Colonic mucosa (tissue), 4 donors: ENCODE measurements at regions of chr1 and their contacts with region 1.

Region 1: GRCh38 chr1:40416709-40417108 is 33.6 kb upstream of the ZFP69B start:
- DNase-seq: no peak
- H3K4me3 ChIP-seq: no peak overlapping the region
- H3K27ac ChIP-seq: no peak overlapping the region
- H3K4me1 ChIP-seq: no peaks in the 10 kb centered on the region
- H3K27me3 ChIP-seq: no peaks in the 10 kb centered on the region
- CTCF ChIP-seq: no peak

Region 2: DNA sequence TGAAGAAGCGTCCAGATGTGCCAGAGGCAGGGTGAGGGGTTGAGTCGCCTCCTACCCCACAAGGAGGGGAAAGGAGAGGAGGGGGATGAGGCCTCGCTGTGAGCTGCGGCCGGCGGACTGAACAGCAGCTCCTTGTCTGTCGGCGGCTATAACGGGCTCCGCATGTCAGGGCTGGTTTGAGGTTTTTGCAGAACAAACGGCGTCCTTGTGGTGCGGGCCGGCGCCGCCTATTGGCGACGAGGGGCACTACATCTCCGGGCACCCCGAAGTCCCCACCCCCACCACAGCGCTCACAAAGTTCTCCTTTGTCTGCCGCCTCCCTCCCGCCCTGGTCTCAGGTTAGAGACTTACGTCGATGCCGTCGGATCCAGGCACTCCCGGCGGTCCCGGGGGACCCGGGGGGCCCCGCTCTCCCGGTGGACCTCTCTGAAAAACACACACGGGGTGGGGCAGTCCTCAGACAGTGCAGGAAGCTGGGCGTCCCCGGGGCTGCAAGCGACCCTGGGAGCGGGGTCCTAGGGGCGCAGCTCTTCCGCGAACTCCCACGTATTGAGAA is 101.4 kb before region 1 on chr1:
- intact Hi-C with region 1: loop called (anchors 5 kb)
- DNase-seq: peak; percentile 84
- H3K4me3 ChIP-seq: peak overlapping the region; percentile 43
- H3K27ac ChIP-seq: no peak overlapping the region
- H3K4me1 ChIP-seq: peaks cover 19% of the 10 kb centered on the region
- H3K27me3 ChIP-seq: peaks cover 31% of the 10 kb centered on the region
- CTCF ChIP-seq: peak; percentile 96